ENCODE measurements at regions of chr11 and their contacts with region 1.

Region 1: DNA sequence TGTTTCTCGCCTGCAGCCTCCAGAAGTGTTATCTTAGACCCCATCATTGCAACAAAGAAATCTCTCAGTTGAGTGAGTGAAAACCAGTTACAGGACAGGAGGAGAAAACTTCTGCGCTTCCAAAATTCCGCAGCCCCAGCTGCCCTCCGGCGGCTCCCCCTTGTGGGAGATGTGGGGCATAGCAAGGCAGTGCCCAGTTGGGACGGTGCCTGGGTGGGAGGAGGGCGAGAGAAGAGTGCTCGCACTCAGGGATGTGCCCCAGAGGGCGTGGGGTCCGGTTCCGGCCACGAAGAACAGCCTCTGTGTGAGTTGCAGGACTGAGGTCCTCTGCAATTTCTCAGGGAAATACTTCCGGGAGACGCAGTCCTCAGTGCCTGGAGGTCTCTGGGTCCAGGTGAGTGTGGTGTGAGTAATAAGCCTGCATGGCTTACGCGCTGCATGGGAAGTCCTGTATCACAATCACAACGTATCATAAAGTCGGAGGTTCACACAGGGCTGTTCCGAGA is 87.0 kb upstream of the BLID start:
- DNase-seq: peak; percentile 64 to 72
- ATAC-seq: peak; percentile 88 to 93
- H3K4me3 ChIP-seq: peak overlapping the region; percentile 38
- H3K27ac ChIP-seq: peak overlapping the region; percentile 83 to 90
- H3K4me1 ChIP-seq: peaks cover 43% of the 10 kb centered on the region
- CTCF ChIP-seq: peak; percentile 79
- EP300 ChIP-seq: no peak
- POLR2A ChIP-seq: no peak
- RAD21 ChIP-seq: peak; percentile 91 to 92

Region 2: DNA sequence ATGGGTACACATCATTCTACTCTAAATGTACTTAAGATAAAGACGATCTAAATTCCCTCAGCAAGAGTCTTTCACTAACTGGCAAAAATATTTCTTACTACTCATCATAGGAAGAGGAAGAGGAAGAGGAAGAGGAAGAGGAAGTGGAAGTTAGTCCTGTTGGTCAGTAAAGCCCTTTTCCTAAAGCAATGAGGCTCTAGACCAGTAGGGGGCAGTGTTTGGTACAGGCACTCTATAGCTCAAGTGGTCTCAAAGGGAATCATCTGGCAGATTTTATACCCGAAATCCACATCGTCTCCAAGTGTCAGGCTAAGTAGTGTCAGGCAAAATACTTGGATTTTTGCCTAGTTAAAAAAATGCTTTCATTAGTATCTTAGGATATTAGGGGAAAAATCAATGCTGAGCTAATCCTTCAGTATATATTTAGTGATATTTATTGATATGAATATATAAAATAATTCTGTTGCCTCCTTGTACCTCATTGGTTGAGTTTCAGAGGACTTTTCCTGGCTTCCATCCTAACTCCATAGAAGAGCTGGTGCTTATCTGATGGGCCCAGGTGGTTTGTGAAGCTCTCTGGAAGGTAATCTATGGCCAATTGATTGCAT is 94.7 kb before region 1 on chr11:
- CTCF ChIA-PET with region 1: interaction called, 16 read pairs
- POLR2A ChIA-PET with region 1: interaction called, 3 read pairs
- DNase-seq: peak in 1 of 2 experiments; percentile 62
- ATAC-seq: peak in 1 of 2 experiments; percentile 80; a peak in 3 of 6 replicates
- H3K4me3 ChIP-seq: no peak overlapping the region
- H3K27ac ChIP-seq: no peak overlapping the region
- H3K4me1 ChIP-seq: peaks cover 16% of the 10 kb centered on the region; the same call in 2 of the 3 replicates
- CTCF ChIP-seq: peak; percentile 55
- EP300 ChIP-seq: no peak
- POLR2A ChIP-seq: no peak
- RAD21 ChIP-seq: peak; percentile 41 to 57; a peak in 4 of 5 replicates

Region 3: DNA sequence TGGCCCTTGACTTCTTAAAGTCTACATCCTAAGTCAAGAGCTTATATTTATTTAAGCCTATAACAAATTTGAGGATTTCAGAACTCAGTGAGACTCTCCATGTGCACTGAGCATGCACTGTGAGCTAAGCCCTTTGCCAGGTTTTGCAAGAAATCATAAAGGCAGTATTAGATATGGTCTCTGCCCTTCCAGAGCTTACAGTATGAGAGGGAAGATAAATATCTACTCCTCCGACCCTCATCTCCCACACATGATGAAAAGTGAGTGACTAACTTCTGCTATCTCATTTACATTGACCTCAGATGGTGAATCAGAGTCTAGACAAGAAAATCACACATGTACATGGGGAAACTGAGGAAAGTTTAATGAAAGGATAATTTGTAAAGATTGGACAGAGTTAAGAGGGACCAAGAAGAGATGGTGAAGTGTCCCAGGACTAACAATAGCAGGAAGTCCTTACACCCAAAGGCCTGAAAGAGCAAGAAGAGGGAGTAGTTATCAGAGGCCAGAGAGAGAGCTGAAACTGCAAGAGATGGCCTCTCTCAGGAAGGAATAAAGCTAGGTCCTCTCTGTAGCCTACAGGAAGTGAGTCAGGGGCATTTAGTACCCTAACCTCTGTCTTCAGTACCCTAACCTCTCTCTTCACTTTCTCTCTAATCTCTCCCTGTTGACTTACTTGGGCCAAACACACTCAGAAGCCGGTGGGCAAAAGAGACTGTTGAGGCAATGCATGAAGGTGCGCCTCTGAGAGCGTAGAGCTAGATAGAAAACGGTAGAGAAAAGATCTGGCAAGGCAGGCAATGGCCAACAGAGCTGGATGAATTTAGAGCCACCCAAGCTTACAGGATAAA is 64.0 kb before region 1 on chr11:
- CTCF ChIA-PET with region 1: interaction called, 15 read pairs
- POLR2A ChIA-PET with region 1: no interaction called
- DNase-seq: no peak
- ATAC-seq: peak in 1 of 2 experiments; percentile 55; a peak in 4 of 6 replicates
- H3K4me3 ChIP-seq: no peak overlapping the region
- H3K27ac ChIP-seq: peak overlapping the region; percentile 28 to 73
- H3K4me1 ChIP-seq: peaks cover 63% of the 10 kb centered on the region
- CTCF ChIP-seq: no peak
- EP300 ChIP-seq: no peak
- POLR2A ChIP-seq: no peak
- RAD21 ChIP-seq: no peak

Region 4: DNA sequence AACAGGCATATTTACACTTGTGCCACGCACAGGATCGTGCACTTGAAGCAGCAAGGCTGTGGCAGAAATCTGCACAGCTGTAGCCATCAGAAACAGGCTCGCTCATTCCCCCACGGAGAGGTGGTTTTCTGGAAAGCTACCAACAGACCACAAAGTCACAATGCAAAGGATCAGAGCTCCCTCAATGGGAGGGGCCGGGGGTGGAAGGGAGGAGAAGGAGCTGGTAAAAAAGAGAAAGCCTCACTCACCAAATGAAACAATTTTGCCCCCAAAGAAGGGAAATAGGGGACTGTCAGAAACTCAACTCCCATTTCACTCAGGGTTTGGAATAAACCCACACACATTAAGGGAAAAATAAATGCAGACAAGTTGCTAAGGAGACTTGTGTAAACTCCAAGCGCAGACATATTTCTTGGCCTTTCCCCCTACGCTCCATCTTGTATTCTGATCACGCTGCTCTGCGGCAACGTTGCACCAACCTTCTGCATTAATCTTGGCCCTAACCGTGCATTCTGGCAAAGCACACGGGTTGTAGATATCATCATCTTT is 43.8 kb before region 1 on chr11:
- CTCF ChIA-PET with region 1: interaction called, 14 read pairs
- POLR2A ChIA-PET with region 1: interaction called, 3 read pairs
- DNase-seq: peak in 1 of 2 experiments; percentile 23
- ATAC-seq: peak; percentile 58 to 60; a peak in 5 of 6 replicates
- H3K4me3 ChIP-seq: peak overlapping the region; percentile 47
- H3K27ac ChIP-seq: peak overlapping the region; percentile 91 to 93
- H3K4me1 ChIP-seq: peaks cover 74% of the 10 kb centered on the region
- CTCF ChIP-seq: no peak
- EP300 ChIP-seq: no peak
- POLR2A ChIP-seq: no peak
- RAD21 ChIP-seq: 0 out of 5 replicates have a peak, but pooled peaks of 1 of the 2 experiments have one; percentile 2

Region 5: GRCh38 chr11:122179961-122180834 is 22.8 kb before region 1 on chr11:
- CTCF ChIA-PET with region 1: interaction called, 17 read pairs
- POLR2A ChIA-PET with region 1: no interaction called
- DNase-seq: peak in 1 of 2 experiments; percentile 69
- ATAC-seq: peak; percentile 89 to 93
- H3K4me3 ChIP-seq: peak overlapping the region; percentile 43
- H3K27ac ChIP-seq: peak overlapping the region; percentile 91
- H3K4me1 ChIP-seq: peaks cover 34% of the 10 kb centered on the region
- CTCF ChIP-seq: no peak
- EP300 ChIP-seq: peak; percentile 53 to 82; a peak in 3 of 5 replicates
- POLR2A ChIP-seq: no peak
- RAD21 ChIP-seq: peak; percentile 3 to 40; a peak in 2 of 5 replicates

Region 6: DNA sequence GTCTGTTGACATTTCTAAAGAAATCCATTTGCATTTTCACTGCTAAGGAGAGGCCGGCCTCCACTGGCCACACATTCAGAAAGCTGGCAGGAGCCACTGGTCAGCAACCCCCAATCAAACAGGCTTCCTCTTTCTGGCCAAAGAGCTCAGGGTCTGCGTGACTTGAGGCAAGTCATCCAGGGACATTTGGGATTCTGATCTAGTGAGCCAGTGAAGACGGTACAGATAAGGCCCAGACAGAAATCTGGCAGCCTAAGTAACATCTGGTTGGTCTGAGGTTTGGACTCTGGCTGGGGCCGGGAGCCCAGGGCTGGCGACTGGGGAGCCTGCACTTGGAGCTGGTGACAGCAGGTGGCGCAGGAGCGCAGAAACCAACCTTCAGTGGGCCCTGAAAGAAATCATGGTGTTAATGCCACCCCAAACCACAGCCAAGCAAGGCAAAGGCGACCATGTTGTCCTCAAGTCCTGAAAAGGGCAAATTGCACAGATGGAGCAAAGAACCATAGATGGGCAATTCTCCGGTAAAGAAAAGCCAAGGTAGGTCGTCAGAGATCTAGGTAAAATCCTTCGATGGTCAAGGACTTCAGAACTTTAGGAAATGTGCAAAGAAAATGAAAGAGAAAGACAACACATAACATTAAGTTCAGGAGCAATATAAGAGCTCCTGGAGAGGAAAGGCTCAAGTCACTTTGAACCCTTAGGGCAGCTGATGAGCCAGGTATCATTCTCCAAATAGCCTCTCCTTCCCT is 12.4 kb after region 1 on chr11:
- CTCF ChIA-PET with region 1: interaction called, 21 read pairs
- POLR2A ChIA-PET with region 1: no interaction called
- DNase-seq: peak; percentile 47 to 59
- ATAC-seq: peak; percentile 94 to 97
- H3K4me3 ChIP-seq: no peak overlapping the region
- H3K27ac ChIP-seq: peak overlapping the region; percentile 26 to 78; a peak in 3 of 6 replicates
- H3K4me1 ChIP-seq: peaks cover 26% of the 10 kb centered on the region
- CTCF ChIP-seq: peak; percentile 62
- EP300 ChIP-seq: no peak
- POLR2A ChIP-seq: no peak
- RAD21 ChIP-seq: peak; percentile 61 to 64

Measured in A549 (cell line).